ENCODE measurements at regions of chr1 and their contacts with region 1.

Region 1: DNA sequence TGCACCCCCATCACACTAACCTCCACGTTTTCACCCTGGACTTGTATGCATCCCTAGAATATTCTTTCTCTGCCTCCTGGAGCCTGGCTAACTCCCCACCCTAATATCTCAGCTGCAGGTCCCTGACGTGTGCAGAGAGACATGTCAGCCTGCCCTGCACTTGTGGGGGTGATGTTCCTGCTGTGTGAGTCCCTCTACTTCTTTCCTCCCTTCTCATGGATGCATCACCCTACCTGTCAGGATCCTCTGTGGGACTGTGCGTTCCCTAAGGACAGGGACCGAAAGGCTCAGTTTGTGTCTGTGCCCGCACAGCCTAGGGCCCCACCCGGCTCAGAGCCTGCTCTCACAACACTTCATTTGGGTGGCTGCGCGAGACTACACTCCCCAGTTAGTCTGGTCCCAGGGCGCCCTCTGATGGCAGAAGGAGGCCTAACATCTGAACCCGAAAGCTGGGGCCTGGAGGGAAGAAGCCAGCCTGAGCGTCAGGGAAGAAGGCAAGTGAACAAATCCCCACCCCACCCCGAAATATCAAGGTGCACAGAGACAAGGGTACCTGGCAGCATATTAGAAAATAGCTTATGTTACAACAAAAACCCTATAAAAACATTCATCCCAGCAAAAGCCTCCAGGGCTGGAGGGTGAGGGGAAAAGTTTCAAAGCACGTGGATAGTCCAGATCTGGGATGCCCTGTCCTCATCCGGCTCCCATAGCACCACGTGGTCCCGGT is 3.7 kb downstream of the CD52 start:
- DNase-seq: peak; percentile 97
- ATAC-seq: peak; percentile 76
- H3K4me3 Mint-ChIP-seq: peak overlapping the region; percentile 84
- H3K27ac Mint-ChIP-seq: peak overlapping the region; percentile 94
- H3K4me1 Mint-ChIP-seq: peaks cover 49% of the 10 kb centered on the region
- H3K27me3 Mint-ChIP-seq: no peaks in the 10 kb centered on the region

Region 2: DNA sequence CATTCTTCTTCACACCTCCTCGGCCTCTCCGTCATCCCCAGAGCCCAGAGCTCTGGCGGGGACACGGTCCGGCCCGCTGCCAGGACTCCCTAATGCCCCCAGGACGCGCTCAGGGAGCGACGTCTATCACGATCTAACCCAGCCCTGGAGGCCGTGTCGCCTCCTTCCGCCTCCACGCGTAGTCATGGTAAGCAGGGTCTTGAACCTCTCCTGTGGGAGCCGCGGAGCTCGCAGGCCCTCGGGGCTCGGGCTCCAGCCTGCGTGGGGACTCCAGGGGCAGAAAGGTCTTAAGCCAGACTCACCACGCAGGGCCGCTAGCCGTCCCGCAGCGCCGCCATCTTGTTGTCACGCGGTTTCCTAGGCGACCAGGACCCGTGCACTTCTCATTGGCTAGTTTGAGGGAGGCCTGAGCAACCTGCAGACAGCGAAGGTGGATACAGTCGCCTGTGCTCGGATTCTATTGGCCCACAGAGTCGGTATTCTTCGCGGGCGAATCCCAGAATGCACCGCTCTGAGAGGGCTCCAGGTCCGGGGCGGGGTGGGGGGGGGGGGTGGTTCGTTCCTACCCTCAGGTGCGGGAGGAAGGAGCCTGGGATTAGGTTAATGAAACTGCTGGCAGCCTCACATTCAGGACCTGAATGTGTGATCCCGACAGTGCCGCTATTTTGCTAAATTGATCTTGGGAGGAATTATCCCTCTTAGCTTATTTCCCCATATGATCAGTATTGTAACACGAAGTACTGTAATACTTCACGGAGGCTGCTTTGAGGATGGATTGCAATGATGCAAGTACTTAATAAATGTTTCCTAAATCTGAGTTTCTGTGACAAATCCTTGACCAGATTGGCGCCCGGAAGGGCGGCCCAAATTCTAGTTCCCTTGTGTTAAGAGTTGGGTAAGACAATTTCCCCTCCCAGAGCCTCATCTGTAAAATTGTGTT is 14.9 kb before region 1 on chr1 and contains the start of gene UBXN11:
- CTCF ChIA-PET with region 1: interaction called, 33 read pairs
- POLR2A ChIA-PET with region 1: interaction called, 51 read pairs
- DNase-seq: peak; percentile 97
- ATAC-seq: peak; percentile 99
- H3K4me3 Mint-ChIP-seq: peak within 1 kb of the TSS; percentile 99
- H3K27ac Mint-ChIP-seq: peak within 1 kb of the TSS; percentile 96
- H3K4me1 Mint-ChIP-seq: peaks cover 38% of the 10 kb centered on the region
- H3K27me3 Mint-ChIP-seq: no peaks in the 10 kb centered on the region
- total RNA-seq, gene UBXN11: 34.4 to 40.9 TPM

Region 3: DNA sequence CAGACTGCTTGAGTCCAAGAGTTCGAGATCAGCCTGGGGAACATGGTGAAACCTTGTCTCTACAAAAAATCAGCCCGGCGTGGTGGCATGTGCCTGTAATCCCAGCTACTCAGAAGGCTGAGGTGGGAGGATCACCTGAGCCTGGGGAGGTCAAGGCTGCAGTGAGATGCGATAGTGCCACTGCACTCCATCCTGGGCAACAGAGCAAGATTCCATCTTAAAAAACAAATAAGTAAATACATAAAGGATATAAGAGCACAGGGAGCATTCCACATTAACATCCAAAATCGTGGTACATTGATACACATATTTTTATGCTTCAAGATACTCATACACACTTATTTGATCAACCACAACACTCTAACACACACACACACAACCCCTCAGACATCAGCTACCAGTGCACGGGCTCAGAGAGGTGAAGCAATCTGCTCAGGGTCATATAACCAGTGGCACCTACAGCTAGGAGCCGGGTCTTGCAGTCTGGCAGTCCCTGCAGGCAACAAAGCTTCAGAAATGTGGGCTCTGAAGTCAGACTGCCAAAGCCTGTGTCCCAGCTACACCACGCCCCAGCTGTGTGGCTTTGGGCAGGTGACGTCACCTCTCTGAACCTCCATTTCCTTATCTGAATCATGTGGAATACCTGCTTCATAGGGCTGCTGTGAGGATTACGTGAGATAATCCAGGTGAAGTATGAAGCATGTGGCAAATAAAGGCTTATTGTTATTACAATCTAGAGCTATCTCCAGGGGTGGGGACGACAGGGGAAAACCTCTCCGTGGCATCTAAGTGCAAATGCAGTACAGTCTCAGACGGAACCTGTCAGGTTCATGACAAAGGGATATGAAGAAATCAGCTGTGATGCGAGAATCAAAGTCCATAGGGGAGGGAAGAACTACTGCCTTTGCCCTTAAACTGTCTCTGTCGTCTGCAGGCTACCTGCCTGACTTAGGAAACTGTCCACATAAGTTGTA is 37.2 kb after region 1 on chr1:
- CTCF ChIA-PET with region 1: interaction called, 14 read pairs
- POLR2A ChIA-PET with region 1: interaction called, 3 read pairs
- DNase-seq: peak; percentile 89
- ATAC-seq: peak; percentile 85
- H3K4me3 Mint-ChIP-seq: peak overlapping the region; percentile 47
- H3K27ac Mint-ChIP-seq: peak overlapping the region; percentile 68
- H3K4me1 Mint-ChIP-seq: peaks cover 70% of the 10 kb centered on the region
- H3K27me3 Mint-ChIP-seq: peaks cover 8% of the 10 kb centered on the region

Region 4: GRCh38 chr1:26378088-26378878 is 56.8 kb after region 1 on chr1:
- CTCF ChIA-PET with region 1: interaction called, 17 read pairs
- POLR2A ChIA-PET with region 1: interaction called, 3 read pairs
- DNase-seq: peak; percentile 93
- ATAC-seq: peak; percentile 95
- H3K4me3 Mint-ChIP-seq: peak overlapping the region; percentile 58
- H3K27ac Mint-ChIP-seq: peak overlapping the region; percentile 97
- H3K4me1 Mint-ChIP-seq: peaks cover 81% of the 10 kb centered on the region
- H3K27me3 Mint-ChIP-seq: no peaks in the 10 kb centered on the region

Region 5: DNA sequence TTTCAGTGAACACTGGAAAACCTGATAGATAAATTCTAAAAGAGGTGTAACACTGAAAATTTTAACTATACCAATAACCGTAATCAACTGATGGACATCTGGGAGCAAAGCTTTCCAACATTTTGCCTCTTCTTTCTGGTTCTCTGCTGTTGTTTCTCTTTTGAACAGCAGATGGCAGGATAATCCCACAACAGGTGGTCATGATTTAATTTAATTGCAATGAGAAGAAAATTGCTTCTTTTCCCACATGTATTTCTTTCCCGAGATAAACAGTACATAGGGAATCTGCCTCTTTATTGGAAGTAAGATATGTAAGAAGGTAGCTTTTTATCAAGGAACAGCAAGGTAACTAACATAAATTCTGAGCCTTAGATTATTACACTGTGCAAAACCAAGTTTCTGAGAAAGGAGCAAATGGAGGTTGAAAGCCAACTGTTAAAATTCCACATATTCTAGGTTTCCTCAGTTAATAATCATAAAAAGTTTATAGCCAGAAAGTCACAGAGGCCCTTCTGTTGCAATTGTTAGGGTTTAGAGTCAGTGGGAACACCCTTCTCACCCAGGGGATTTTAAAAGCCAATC is 281.0 kb after region 1 on chr1:
- CTCF ChIA-PET with region 1: no interaction called
- POLR2A ChIA-PET with region 1: no interaction called
- DNase-seq: peak; percentile 64
- ATAC-seq: peak; percentile 42
- H3K4me3 Mint-ChIP-seq: no peak overlapping the region
- H3K27ac Mint-ChIP-seq: no peak overlapping the region
- H3K4me1 Mint-ChIP-seq: peaks cover 23% of the 10 kb centered on the region
- H3K27me3 Mint-ChIP-seq: peaks cover 17% of the 10 kb centered on the region